ENCODE measurements at regions of chr10 and their contacts with region 1.

Region 1: DNA sequence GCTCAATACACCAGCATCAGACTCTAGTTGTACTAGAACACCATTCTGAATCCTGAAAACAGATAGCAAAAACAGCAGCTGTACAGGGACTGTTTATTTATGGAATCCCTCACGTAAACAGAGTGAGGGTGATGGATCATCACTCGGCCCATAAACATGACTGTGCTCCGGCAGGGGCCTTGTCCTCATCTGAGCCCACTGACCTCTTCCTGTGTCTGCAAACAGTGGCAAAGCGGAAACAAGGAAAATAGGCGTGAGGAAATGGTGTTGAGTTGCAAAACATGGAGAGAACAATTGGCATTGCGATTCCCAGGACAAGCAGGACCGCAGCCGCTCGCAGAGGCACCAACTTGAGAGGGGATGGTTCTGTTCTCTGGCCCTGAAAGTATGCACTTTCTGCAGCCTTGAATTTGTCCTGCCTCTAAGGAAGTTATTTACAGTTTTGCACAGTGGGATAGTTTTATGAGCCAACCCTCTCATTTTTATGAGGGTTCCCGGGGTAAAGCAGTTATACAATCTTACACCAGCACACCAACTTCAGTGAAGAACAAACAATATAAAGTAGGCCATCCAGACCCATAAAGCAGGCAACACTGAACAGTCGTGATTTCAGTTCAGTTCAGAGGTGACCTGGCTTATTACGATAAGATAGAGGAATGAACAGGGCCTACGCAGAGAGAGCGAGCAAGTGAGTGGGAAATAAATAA is 248.0 kb upstream of the FZD8 start:
- DNase-seq: peak; percentile 71
- H3K4me3 ChIP-seq: no peak overlapping the region
- H3K27ac ChIP-seq: peak overlapping the region in 3 of 4 donors; percentile 73 to 76 (median 73)
- H3K4me1 ChIP-seq: peaks cover 0 to 29% (median 26%) of the 10 kb centered on the region in 4 donors
- H3K27me3 ChIP-seq: no peaks in the 10 kb centered on the region
- CTCF ChIP-seq: no peak
- EP300 ChIP-seq: peak in 2 of 4 donors; percentile 17 to 47
- POLR2A ChIP-seq: no peak

Region 2: GRCh38 chr10:35726846-35727245 is 163.3 kb before region 1 on chr10:
- intact Hi-C with region 1: loop called (anchors 5 kb)
- DNase-seq: no peak
- H3K4me3 ChIP-seq: no peak overlapping the region
- H3K27ac ChIP-seq: peak overlapping the region in 3 of 4 donors; percentile 65 to 75 (median 72)
- H3K4me1 ChIP-seq: peaks cover 0 to 27% (median 24%) of the 10 kb centered on the region in 4 donors
- H3K27me3 ChIP-seq: no peaks in the 10 kb centered on the region
- CTCF ChIP-seq: no peak
- EP300 ChIP-seq: peak in 3 of 4 donors; percentile 26 to 78 (median 38)
- POLR2A ChIP-seq: no peak

Region 3: GRCh38 chr10:35822316-35822715 is 67.8 kb before region 1 on chr10:
- intact Hi-C with region 1: loop called (anchors 5 kb)
- DNase-seq: peak; percentile 95
- H3K4me3 ChIP-seq: no peak overlapping the region
- H3K27ac ChIP-seq: peak overlapping the region in 3 of 4 donors; percentile 33 to 63 (median 54)
- H3K4me1 ChIP-seq: peaks cover 0 to 21% (median 19%) of the 10 kb centered on the region in 4 donors
- H3K27me3 ChIP-seq: no peaks in the 10 kb centered on the region
- CTCF ChIP-seq: peak; percentile 33 to 44 (median 43)
- EP300 ChIP-seq: no peak
- POLR2A ChIP-seq: no peak

Measured in sigmoid colon (tissue), 7 donors.